Heart left ventricle (tissue), 16 donors: ENCODE measurements at regions of chr11 and their contacts with region 1.

Region 1: GRCh38 chr11:93791493-93791892 is 7.4 kb downstream of the MED17 start:
- DNase-seq: no peak
- ATAC-seq: no peak
- H3K4me3 ChIP-seq: no peak overlapping the region
- H3K27ac ChIP-seq: no peak overlapping the region
- H3K4me1 ChIP-seq: peaks cover 0 to 18% (median 9%) of the 10 kb centered on the region in 12 donors
- H3K27me3 ChIP-seq: no peaks in the 10 kb centered on the region
- CTCF ChIP-seq: no peak
- POLR2A ChIP-seq: no peak

Region 2: DNA sequence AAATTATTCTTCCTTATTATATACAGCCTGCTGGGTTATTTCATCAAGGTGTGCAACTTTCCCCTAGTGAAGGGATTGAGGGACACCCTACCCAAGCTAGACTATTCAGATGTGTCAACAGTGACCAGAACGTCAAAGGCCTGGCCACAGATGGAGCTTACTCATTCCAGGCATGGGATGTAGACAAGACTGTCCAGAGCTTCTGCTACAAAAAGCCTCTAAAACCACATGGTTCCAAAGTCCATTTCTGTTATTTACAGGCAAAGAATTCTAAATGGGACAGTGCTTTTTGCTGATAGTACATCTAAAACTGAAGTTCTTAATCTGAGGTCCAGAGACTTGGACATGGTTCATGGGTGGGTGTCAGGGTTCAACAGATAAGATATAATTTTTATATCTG is 238.6 kb before region 1 on chr11:
- intact Hi-C with region 1: no loop called
- DNase-seq: no peak
- ATAC-seq: no peak
- H3K4me3 ChIP-seq: no peak overlapping the region
- H3K27ac ChIP-seq: no peak overlapping the region
- H3K4me1 ChIP-seq: no peaks in the 10 kb centered on the region
- H3K27me3 ChIP-seq: peaks cover 0 to 8% (median 0%) of the 10 kb centered on the region in 9 donors
- CTCF ChIP-seq: no peak
- POLR2A ChIP-seq: no peak

Region 3: DNA sequence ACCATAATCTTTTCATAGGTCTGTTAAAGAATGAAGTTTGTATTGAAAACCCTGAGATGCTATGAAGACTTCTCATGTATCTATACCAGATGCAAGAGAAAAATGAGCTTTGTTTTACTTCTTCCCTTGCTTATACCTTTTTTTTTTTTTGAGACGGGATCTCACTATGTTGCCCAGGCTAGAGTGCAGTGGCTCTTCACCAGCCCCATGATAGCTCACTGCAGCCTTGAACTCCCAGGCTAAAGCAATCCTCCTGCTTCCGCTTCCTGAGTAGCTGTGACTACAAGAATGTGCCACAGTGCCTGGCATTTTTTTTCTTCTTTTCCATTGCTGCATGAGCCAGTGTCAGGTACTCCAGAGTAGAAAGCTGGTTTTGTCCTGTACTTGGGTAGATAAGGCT is 119.2 kb before region 1 on chr11:
- intact Hi-C with region 1: loop called in 1 of 10 experiments (anchors 10 kb)
- DNase-seq: no peak
- ATAC-seq: no peak
- H3K4me3 ChIP-seq: no peak overlapping the region
- H3K27ac ChIP-seq: no peak overlapping the region
- H3K4me1 ChIP-seq: no peaks in the 10 kb centered on the region
- H3K27me3 ChIP-seq: no peaks in the 10 kb centered on the region
- CTCF ChIP-seq: no peak
- POLR2A ChIP-seq: no peak

Region 4: GRCh38 chr11:93734427-93735222 is 56.9 kb before region 1 on chr11:
- intact Hi-C with region 1: loop called in 1 of 10 experiments (anchors 5 kb)
- DNase-seq: no peak
- ATAC-seq: peak in 1 of 4 donors; percentile 28
- H3K4me3 ChIP-seq: no peak overlapping the region
- H3K27ac ChIP-seq: no peak overlapping the region
- H3K4me1 ChIP-seq: peaks cover 0 to 49% (median 21%) of the 10 kb centered on the region in 12 donors
- H3K27me3 ChIP-seq: no peaks in the 10 kb centered on the region
- CTCF ChIP-seq: no peak
- POLR2A ChIP-seq: no peak

Region 5: DNA sequence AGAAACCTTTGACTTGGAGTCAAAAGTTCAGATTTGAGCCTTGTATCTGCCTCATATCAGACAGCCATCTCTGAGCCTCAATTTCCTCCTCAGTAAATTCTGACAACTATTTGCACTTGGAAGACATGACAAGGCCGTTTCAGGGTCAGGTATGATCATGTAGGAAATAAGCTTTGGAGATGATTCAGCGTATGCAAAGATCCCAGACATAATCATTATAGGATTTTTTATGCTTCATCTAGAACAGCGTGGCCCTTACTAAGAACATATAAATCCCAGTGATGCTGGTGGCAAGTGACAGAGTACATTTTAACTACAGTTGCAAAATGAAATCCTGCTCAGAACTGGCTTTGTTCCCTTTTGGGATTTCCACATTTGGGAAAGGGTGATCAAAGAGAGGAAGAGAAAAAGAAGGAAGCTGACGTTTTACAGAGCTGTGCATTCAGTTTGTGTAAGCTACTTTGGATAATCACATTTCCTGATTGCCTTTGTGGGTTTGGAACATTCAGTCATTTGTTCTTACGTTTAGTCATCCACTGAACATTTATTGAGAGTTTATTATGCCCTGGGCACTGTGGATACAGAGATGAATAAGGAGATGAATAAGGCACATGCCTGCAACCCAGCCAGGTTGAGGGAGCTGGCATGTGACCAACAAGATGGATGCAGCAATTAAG is 147.7 kb after region 1 on chr11:
- intact Hi-C with region 1: no loop called
- DNase-seq: no peak
- ATAC-seq: no peak
- H3K4me3 ChIP-seq: no peak overlapping the region
- H3K27ac ChIP-seq: no peak overlapping the region
- H3K4me1 ChIP-seq: no peaks in the 10 kb centered on the region
- H3K27me3 ChIP-seq: peaks cover 0 to 4% (median 0%) of the 10 kb centered on the region in 9 donors
- CTCF ChIP-seq: no peak
- POLR2A ChIP-seq: no peak